ENCODE measurements at regions of chr5 and their contacts with region 1.

Region 1: GRCh38 chr5:139711067-139711905 is 63.1 kb downstream of the CXXC5 start:
- DNase-seq: no peak
- ATAC-seq: peak; percentile 45
- H3K4me3 Mint-ChIP-seq: peak overlapping the region; percentile 82
- H3K27ac Mint-ChIP-seq: peak overlapping the region; percentile 46
- H3K4me1 Mint-ChIP-seq: peaks cover 30% of the 10 kb centered on the region
- H3K27me3 Mint-ChIP-seq: no peaks in the 10 kb centered on the region
- CTCF ChIP-seq: no peak

Region 2: GRCh38 chr5:139660923-139661814 is 50.1 kb before region 1 on chr5:
- CTCF ChIA-PET with region 1: no interaction called
- POLR2A ChIA-PET with region 1: interaction called, 6 read pairs
- intact Hi-C with region 1: loop called (anchors 2 kb)
- DNase-seq: peak; percentile 69
- ATAC-seq: peak; percentile 71
- H3K4me3 Mint-ChIP-seq: peak overlapping the region; percentile 75
- H3K27ac Mint-ChIP-seq: peak overlapping the region; percentile 96
- H3K4me1 Mint-ChIP-seq: peaks cover 94% of the 10 kb centered on the region
- H3K27me3 Mint-ChIP-seq: no peaks in the 10 kb centered on the region
- CTCF ChIP-seq: no peak

Region 3: GRCh38 chr5:139690064-139690802 is 21.1 kb before region 1 on chr5:
- CTCF ChIA-PET with region 1: interaction called, 4 read pairs
- POLR2A ChIA-PET with region 1: interaction called, 15 read pairs
- intact Hi-C with region 1: no loop called
- DNase-seq: no peak
- ATAC-seq: peak; percentile 56
- H3K4me3 Mint-ChIP-seq: no peak overlapping the region
- H3K27ac Mint-ChIP-seq: peak overlapping the region; percentile 67
- H3K4me1 Mint-ChIP-seq: peaks cover 53% of the 10 kb centered on the region
- H3K27me3 Mint-ChIP-seq: no peaks in the 10 kb centered on the region
- CTCF ChIP-seq: peak; percentile 19

Region 4: DNA sequence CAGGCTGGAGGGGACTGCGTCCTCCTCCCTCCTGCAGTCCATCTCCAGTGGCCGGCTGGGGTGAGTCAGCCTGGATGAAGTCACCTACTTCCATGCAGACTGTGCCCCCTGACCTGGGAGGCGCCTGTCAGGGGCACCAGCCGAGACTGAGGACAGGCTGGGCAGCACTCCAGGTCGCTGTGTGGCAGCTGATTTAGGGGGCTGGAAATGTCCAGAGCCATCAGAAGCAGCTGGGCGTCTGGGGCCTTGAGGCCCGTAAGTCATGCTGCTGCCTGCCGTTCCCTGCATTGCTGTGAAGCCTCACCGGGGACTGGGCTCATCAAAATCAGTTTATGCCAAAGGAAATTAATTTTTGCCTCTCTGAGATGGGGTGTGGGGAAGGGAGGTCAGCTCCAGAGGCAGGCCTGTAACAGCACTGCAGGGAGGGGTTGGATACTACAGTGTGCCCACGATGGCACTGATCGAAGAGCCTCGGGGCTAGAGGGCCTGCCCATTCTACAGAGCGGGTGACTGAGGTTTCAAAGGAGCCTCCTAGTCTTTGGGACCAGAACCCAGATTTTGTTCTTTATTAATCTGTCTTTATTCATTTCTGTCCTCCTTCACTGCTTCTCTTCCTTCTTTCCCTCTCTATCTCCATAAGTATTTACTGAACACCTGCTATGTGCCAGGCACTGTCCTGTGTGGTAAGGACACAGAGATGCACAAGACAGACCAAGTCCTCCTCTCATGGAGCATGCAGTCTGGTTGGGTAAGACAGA is 14.0 kb after region 1 on chr5:
- CTCF ChIA-PET with region 1: no interaction called
- POLR2A ChIA-PET with region 1: interaction called, 8 read pairs
- intact Hi-C with region 1: loop called (anchors 1 kb)
- DNase-seq: no peak
- ATAC-seq: no peak
- H3K4me3 Mint-ChIP-seq: no peak overlapping the region
- H3K27ac Mint-ChIP-seq: no peak overlapping the region
- H3K4me1 Mint-ChIP-seq: peaks cover 17% of the 10 kb centered on the region
- H3K27me3 Mint-ChIP-seq: no peaks in the 10 kb centered on the region
- CTCF ChIP-seq: no peak